A549 (cell line): ENCODE measurements at regions of chr3 and their contacts with region 1.

Region 1: DNA sequence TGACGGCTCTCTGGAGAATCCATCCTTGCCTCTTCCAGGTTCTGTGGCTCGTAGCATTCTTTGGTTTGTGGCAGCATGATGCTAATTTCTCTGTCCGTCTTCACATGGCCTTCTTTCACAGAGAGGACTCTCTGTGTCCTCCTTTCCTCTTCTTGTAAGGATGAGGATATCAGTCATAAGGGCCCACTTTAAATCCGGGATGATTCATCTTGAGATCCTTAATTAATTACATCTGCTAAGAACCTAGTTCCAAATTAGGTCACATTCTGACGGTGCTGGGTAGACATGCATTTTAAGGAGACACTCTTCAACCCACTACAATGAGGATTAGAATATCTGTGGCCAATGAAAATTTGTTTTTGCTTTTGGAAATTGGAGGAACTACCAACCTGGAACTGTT is 15.7 kb upstream of the GXYLT2 start:
- DNase-seq: no peak
- ATAC-seq: no peak
- H3K4me3 ChIP-seq: no peak overlapping the region
- H3K27ac ChIP-seq: no peak overlapping the region
- H3K4me1 ChIP-seq: no peaks in the 10 kb centered on the region
- CTCF ChIP-seq: no peak
- EP300 ChIP-seq: no peak
- POLR2A ChIP-seq: no peak
- RAD21 ChIP-seq: no peak

Region 2: DNA sequence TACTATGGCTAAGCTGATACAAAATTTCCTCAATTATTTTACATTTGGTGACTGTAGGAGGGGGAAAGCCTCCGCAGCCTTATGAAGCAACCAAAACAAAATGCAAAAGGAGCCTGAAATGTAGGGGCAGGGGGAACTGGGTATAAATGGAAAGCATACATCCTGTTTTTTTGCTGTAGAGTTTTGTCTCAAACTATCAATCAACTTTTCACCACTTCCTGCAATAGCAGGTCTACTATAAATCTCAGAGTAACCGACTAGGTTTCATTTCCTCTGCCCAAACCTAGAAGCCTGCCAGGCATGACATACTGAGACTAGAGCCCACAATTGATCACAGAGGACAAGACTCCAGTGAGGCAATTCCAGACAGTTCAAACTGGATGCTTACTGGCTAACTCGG is 115.3 kb before region 1 on chr3:
- CTCF ChIA-PET with region 1: no interaction called
- POLR2A ChIA-PET with region 1: no interaction called
- DNase-seq: no peak
- ATAC-seq: no peak
- H3K4me3 ChIP-seq: no peak overlapping the region
- H3K27ac ChIP-seq: no peak overlapping the region
- H3K4me1 ChIP-seq: peaks cover 6% of the 10 kb centered on the region; the same call in 1 of the 3 replicates
- CTCF ChIP-seq: no peak
- EP300 ChIP-seq: no peak
- POLR2A ChIP-seq: no peak
- RAD21 ChIP-seq: no peak

Region 3: DNA sequence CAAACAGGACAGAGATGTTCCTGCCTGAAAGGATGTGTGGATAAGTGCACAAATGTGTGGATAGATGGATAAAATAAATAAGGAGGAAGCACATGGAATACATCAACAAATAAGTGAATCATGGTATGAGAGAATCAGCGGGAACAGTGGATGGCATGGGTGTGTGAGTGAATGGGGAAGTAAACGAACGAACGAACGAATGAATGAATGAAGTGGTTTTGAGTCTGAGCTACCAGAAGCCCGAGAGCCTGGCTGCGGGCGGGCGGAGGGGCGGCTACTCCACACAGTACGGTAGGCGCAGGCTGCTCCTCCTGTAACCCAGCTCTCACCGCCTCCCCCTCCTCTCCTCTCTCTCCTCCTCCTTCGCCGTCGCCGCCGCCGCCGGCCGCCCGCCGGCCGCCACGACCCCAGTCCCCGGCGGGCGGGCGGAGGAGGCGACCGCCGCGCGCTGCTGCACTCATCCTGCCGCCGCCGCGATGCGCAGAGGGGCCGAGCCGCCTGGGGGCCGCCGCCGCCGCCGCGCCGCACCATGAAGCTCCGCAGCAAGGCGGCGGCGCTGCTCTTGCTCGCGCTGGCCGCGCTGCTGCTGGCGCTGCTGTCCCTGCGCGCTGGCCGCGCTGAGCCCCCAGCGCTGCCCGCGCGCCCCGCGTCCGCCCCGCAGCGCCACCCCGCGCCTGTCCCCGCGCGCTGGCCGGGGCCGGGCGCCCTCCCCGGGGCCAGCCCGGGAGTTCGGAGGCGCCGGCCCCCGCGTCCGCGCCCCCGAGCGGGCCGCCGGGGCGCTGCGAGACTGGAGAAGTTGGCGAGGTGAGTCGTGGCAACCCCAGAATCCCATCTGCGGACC is 15.7 kb after region 1 on chr3 and contains the start of gene GXYLT2:
- CTCF ChIA-PET with region 1: interaction called, 14 read pairs
- POLR2A ChIA-PET with region 1: no interaction called
- DNase-seq: peak; percentile 58 to 75
- ATAC-seq: peak; percentile 94 to 95
- H3K4me3 ChIP-seq: peak within 1 kb of the TSS; percentile 71
- H3K27ac ChIP-seq: peak within 1 kb of the TSS; percentile 76 to 96
- H3K4me1 ChIP-seq: peaks cover 29% of the 10 kb centered on the region
- CTCF ChIP-seq: peak; percentile 51
- EP300 ChIP-seq: no peak
- POLR2A ChIP-seq: peak; percentile 46
- RAD21 ChIP-seq: no peak
- polyA plus RNA-seq, gene GXYLT2: 3.2 and 3.3 TPM in 2 replicates